ENCODE measurements at regions of chr6 and their contacts with region 1.

Region 1: GRCh38 chr6:37653933-37654565 is 43.6 kb downstream of the MDGA1 start:
- DNase-seq: peak; percentile 60
- ATAC-seq: no peak
- H3K4me3 ChIP-seq: no peak overlapping the region
- H3K4me3 Mint-ChIP-seq: no peak overlapping the region
- H3K27ac ChIP-seq: no peak overlapping the region
- H3K27ac Mint-ChIP-seq: no peak overlapping the region
- H3K4me1 ChIP-seq: peaks cover 9% of the 10 kb centered on the region in 2 donors
- H3K4me1 Mint-ChIP-seq: peaks cover 8% of the 10 kb centered on the region
- H3K27me3 ChIP-seq: peaks cover 0 to 17% (median 6%) of the 10 kb centered on the region in 4 experiments
- H3K27me3 Mint-ChIP-seq: peaks cover 15% of the 10 kb centered on the region
- CTCF ChIP-seq: peak; percentile 71

Region 2: GRCh38 chr6:37483917-37484785 is 169.9 kb before region 1 on chr6:
- CTCF ChIA-PET with region 1: interaction called, 3 read pairs
- POLR2A ChIA-PET with region 1: no interaction called
- intact Hi-C with region 1: loop called (anchors 1 kb)
- DNase-seq: peak; percentile 81
- ATAC-seq: peak; percentile 91
- H3K4me3 ChIP-seq: no peak overlapping the region
- H3K4me3 Mint-ChIP-seq: no peak overlapping the region
- H3K27ac ChIP-seq: peak overlapping the region in 1 of 2 donors; percentile 19
- H3K27ac Mint-ChIP-seq: no peak overlapping the region
- H3K4me1 ChIP-seq: peaks cover 0 to 14% of the 10 kb centered on the region in 2 donors
- H3K4me1 Mint-ChIP-seq: peaks cover 9% of the 10 kb centered on the region
- H3K27me3 ChIP-seq: no peaks in the 10 kb centered on the region
- H3K27me3 Mint-ChIP-seq: no peaks in the 10 kb centered on the region
- CTCF ChIP-seq: peak; percentile 86